ENCODE measurements at regions of chr6 and their contacts with region 1.

Region 1: DNA sequence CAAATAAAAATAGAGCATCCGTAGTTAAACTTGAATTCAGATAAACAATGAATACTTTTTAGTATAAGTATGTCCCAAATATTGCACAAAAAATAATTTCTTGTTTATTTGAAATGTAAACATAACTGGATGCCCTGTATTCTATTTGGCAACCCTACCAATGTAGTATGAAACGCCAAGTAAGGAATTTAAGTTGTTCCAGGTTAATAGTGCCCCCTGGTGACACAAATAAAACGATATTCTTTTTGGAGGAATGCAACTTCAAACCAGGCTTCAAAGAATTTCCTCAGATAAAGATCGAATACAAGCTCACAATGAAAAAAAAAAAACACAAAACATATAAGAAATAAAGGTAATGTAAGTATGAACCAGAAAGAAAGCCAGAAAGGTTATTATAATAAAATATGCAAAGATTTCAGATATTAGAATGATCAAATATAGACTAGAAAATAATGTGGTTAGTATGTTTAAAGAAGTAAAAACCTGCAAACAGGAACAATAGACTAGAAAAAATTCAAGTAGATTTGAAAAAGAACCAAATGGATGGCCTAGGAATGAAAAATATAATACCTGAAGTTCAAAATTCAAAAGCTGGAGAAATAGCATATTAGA is 18.4 kb upstream of the AKAP7 start:
- DNase-seq: no peak
- H3K4me3 ChIP-seq: no peak overlapping the region
- CTCF ChIP-seq: no peak
- POLR2A ChIP-seq: no peak

Region 2: GRCh38 chr6:130885392-130886192 is 231.3 kb before region 1 on chr6:
- intact Hi-C with region 1: loop called (anchors 10 kb)
- DNase-seq: peak in 1 of 2 donors; percentile 66
- H3K4me3 ChIP-seq: no peak overlapping the region
- CTCF ChIP-seq: peak in 1 of 3 donors; percentile 70
- POLR2A ChIP-seq: no peak

Region 3: GRCh38 chr6:131555992-131556391 is 439.1 kb after region 1 on chr6:
- intact Hi-C with region 1: no loop called
- DNase-seq: no peak
- H3K4me3 ChIP-seq: no peak overlapping the region
- CTCF ChIP-seq: no peak
- POLR2A ChIP-seq: no peak

Region 4: DNA sequence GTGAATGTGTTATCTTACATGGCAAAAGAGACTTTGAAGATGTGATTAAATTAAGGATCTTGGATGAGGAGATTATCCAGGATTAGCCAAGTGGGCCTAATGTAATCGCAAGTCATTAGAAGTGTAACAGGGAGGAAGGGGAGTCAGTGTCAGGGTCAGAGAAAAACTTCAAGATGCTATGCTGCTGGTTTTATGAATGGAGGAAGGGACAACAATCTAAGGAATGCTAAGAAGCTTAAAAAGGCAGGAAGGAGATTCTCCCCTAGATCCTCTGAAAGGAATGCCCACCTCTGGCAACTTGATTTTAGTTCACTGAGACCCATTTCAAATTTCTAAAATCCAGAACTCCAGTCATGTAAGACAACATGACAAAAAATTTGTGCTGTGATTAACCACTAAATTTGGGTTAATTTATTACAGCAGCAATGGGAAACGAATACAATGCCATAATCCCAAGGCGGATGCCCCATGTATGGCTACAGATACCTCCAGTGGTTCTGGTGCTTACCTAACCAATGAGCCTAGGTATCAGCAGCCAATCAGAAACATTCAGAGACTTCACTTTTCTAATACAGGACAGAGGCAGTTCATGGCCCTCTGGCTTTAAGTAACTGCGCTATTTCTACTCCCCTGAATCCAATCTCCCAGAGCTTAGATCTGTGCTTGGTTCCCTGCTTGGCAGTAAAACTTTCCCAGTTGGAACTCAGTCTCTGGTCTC is 1432.0 kb after region 1 on chr6:
- intact Hi-C with region 1: no loop called
- DNase-seq: no peak
- H3K4me3 ChIP-seq: no peak overlapping the region
- CTCF ChIP-seq: no peak
- POLR2A ChIP-seq: no peak

Measured in lower leg skin (tissue), 4 donors.